CD14-positive monocyte (primary cell): ENCODE measurements at regions of chr21 and their contacts with region 1.

Region 1: GRCh38 chr21:38297194-38297631 is 40.4 kb downstream of the KCNJ15 start:
- DNase-seq: peak in 2 of 3 donors; percentile 40 to 61
- H3K4me3 ChIP-seq: peak overlapping the region in 1 of 3 experiments; percentile 54
- H3K4me3 Mint-ChIP-seq: peak overlapping the region in 1 of 2 donors; percentile 67
- H3K27ac ChIP-seq: peak overlapping the region; percentile 53 to 89
- H3K27ac Mint-ChIP-seq: peak overlapping the region; percentile 89 to 96 (median 94)
- H3K4me1 ChIP-seq: peaks cover 66 to 89% of the 10 kb centered on the region in 2 donors
- H3K4me1 Mint-ChIP-seq: peaks cover 84% of the 10 kb centered on the region
- H3K27me3 ChIP-seq: no peaks in the 10 kb centered on the region
- H3K27me3 Mint-ChIP-seq: peaks cover 0 to 2% (median 0%) of the 10 kb centered on the region in 3 donors
- CTCF ChIP-seq: no peak

Region 2: DNA sequence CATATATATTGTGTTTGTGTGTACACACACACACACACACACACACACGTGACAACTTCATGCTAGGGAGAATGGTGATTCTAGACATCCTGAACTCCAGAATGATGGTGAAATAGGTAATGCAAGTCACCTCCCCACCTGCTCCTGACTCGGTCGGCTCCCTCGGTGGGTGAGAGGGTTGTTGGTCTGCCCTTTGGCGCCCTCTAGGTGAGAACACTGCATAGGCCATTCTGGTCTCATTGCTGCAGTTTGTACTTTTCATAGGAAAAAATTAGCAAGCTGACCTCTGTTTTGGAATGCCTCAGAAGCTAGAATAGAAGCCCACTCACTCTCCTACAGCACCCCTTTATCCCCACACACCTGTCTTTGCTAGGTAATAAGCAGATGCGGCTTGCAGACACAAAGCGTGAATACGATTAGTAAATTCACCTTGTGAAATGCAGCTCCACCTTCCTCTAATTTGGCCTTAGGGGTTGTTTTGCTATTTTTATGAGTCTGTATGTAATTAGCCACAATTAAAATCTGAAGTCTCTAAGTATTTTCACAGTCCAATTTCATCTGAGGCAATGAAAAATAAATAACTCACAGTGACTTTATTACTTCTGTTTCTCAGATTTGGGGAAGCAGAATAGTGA is 170.4 kb before region 1 on chr21:
- intact Hi-C with region 1: no loop called
- DNase-seq: peak; percentile 13 to 36 (median 35)
- H3K4me3 ChIP-seq: no peak overlapping the region
- H3K4me3 Mint-ChIP-seq: no peak overlapping the region
- H3K27ac ChIP-seq: no peak overlapping the region
- H3K27ac Mint-ChIP-seq: peak overlapping the region in 1 of 7 donors; percentile 68
- H3K4me1 ChIP-seq: no peaks in the 10 kb centered on the region
- H3K4me1 Mint-ChIP-seq: peaks cover 1% of the 10 kb centered on the region
- H3K27me3 ChIP-seq: peaks cover 2 to 3% of the 10 kb centered on the region in 2 donors
- H3K27me3 Mint-ChIP-seq: peaks cover 7 to 11% (median 8%) of the 10 kb centered on the region in 3 donors
- CTCF ChIP-seq: peak; percentile 77

Region 3: DNA sequence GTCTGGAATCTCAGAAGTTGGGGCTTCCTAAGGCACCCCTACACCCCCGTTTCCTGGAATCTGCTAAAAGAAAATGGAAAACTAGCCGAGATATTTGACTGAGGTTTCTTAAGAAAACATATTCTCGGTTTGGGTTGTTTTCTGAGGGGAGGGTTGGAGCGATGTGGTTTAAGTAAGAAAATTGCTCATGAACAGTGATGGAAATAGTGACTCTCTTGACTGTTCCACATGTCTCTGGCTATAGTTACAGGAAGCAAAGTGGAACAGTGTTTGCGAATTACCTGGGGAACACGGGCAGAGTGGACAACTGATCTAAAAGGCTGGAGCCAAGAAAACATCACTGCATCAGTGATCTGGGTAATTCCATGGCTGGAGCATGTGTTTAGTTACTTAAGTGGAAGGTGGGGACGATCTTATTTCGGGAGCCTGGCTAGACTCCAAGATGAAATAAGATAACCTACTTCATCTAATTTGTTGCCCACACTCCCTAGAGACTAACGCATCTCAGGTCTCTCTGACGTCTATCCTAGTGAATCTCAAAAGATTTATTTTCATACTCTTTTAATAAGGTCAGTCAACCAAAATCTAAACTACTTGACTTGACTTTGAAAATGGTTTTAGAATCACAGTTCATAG is 52.0 kb after region 1 on chr21:
- intact Hi-C with region 1: loop called (anchors 5 kb)
- DNase-seq: no peak
- H3K4me3 ChIP-seq: no peak overlapping the region
- H3K4me3 Mint-ChIP-seq: no peak overlapping the region
- H3K27ac ChIP-seq: no peak overlapping the region
- H3K27ac Mint-ChIP-seq: no peak overlapping the region
- H3K4me1 ChIP-seq: peaks cover 25 to 38% of the 10 kb centered on the region in 2 donors
- H3K4me1 Mint-ChIP-seq: peaks cover 39% of the 10 kb centered on the region
- H3K27me3 ChIP-seq: no peaks in the 10 kb centered on the region
- H3K27me3 Mint-ChIP-seq: peaks cover 2 to 9% (median 7%) of the 10 kb centered on the region in 3 donors
- CTCF ChIP-seq: no peak